ENCODE measurements at regions of chr1 and their contacts with region 1.

Region 1: DNA sequence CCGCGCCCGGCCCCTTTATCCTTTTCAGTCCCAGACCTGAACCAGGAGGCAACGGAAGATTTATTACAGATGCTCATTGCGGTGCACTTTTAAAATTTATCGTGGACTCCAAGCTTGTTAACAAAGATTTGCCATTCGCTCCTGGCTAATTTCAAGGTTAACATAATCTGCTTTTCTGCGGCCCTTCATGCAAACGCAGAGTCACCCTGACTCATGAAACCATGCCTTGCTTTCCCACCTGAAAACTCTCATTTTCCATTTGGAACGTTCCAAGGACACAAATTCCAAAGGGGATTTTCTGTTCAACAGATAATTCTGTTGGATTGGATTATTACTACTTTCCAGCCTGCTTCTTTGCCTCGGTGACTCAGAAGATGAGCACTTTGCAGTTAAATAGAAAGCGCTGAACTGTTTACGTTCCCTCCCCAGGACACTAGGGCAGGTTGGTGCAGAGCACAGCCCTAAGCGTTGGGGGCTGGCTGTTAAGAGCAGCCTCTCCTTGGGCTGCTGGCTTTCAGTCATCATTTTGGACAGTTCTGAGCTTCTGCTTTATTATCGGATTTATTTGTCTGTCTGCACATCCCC is 51.1 kb downstream of the CD247 start:
- DNase-seq: no peak
- ATAC-seq: peak; percentile 69
- H3K4me3 ChIP-seq: no peak overlapping the region
- H3K27ac ChIP-seq: no peak overlapping the region; the same call in 2 of the 3 replicates
- H3K4me1 ChIP-seq: peaks cover 0 to 4% of the 10 kb centered on the region in 2 experiments; a peak in 2 of 5 replicates
- H3K27me3 ChIP-seq: peaks cover 6 to 25% of the 10 kb centered on the region in 2 experiments; a peak in 4 of 5 replicates
- CTCF ChIP-seq: no peak
- EP300 ChIP-seq: no peak
- POLR2A ChIP-seq: no peak
- RAD21 ChIP-seq: no peak

Region 2: DNA sequence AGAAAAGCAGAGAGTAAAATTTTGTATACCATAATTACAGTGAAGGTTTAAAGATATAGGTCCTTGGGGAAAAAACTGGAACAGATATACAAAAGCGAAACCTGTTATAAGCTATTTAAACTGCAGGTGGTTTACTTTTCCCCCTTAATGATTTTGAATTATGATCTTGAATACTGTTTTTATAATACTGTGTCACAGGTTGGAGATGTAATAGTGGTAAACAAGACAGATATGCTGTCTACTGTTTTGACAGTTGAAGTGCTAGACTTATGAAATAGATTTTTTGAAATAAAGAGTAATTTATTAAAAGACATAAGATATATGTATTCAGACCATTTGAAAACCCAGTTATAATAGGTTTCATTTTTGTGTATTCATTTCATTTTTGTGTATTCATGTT is 78.2 kb before region 1 on chr1:
- CTCF ChIA-PET with region 1: no interaction called
- POLR2A ChIA-PET with region 1: no interaction called
- in situ Hi-C with region 1: no loop called
- intact Hi-C with region 1: no loop called
- DNase-seq: no peak
- ATAC-seq: no peak
- H3K4me3 ChIP-seq: no peak overlapping the region
- H3K27ac ChIP-seq: no peak overlapping the region
- H3K4me1 ChIP-seq: peaks cover 0 to 9% of the 10 kb centered on the region in 2 experiments; a peak in 2 of 5 replicates
- H3K27me3 ChIP-seq: no peaks in the 10 kb centered on the region
- CTCF ChIP-seq: no peak
- EP300 ChIP-seq: no peak
- POLR2A ChIP-seq: no peak
- RAD21 ChIP-seq: no peak

Region 3: GRCh38 chr1:167401260-167401873 is 65.9 kb before region 1 on chr1:
- CTCF ChIA-PET with region 1: no interaction called
- POLR2A ChIA-PET with region 1: no interaction called
- in situ Hi-C with region 1: no loop called
- intact Hi-C with region 1: loop called (anchors 2 kb)
- DNase-seq: peak; percentile 38 to 78 (median 58)
- ATAC-seq: peak; percentile 99
- H3K4me3 ChIP-seq: no peak overlapping the region
- H3K27ac ChIP-seq: no peak overlapping the region
- H3K4me1 ChIP-seq: no peaks in the 10 kb centered on the region
- H3K27me3 ChIP-seq: no peaks in the 10 kb centered on the region
- CTCF ChIP-seq: peak; percentile 75 to 91 (median 86)
- EP300 ChIP-seq: no peak
- POLR2A ChIP-seq: no peak
- RAD21 ChIP-seq: peak; percentile 89

Region 4: GRCh38 chr1:167477986-167478385 is 10.8 kb after region 1 on chr1:
- CTCF ChIA-PET with region 1: no interaction called
- POLR2A ChIA-PET with region 1: interaction called, 10 read pairs
- in situ Hi-C with region 1: no loop called
- intact Hi-C with region 1: no loop called
- DNase-seq: no peak
- ATAC-seq: no peak
- H3K4me3 ChIP-seq: no peak overlapping the region
- H3K27ac ChIP-seq: no peak overlapping the region
- H3K4me1 ChIP-seq: peaks cover 0 to 7% of the 10 kb centered on the region in 2 experiments; a peak in 1 of 5 replicates
- H3K27me3 ChIP-seq: peaks cover 9 to 46% of the 10 kb centered on the region in 2 experiments
- CTCF ChIP-seq: no peak
- EP300 ChIP-seq: no peak
- POLR2A ChIP-seq: no peak
- RAD21 ChIP-seq: no peak

Region 5: GRCh38 chr1:167584581-167584980 is 117.4 kb after region 1 on chr1:
- CTCF ChIA-PET with region 1: no interaction called
- POLR2A ChIA-PET with region 1: no interaction called
- in situ Hi-C with region 1: no loop called
- intact Hi-C with region 1: no loop called
- DNase-seq: no peak
- ATAC-seq: no peak
- H3K4me3 ChIP-seq: no peak overlapping the region
- H3K27ac ChIP-seq: no peak overlapping the region
- H3K4me1 ChIP-seq: no peaks in the 10 kb centered on the region; a peak in 2 of 5 replicates
- H3K27me3 ChIP-seq: no peaks in the 10 kb centered on the region
- CTCF ChIP-seq: no peak
- EP300 ChIP-seq: no peak
- POLR2A ChIP-seq: no peak
- RAD21 ChIP-seq: no peak